Left cardiac atrium (tissue), 4 donors: ENCODE measurements at regions of chr12 and their contacts with region 1.

Region 1: GRCh38 chr12:46675736-46676135 is 150.1 kb downstream of the SLC38A4 start:
- DNase-seq: peak; percentile 34
- ATAC-seq: peak; percentile 34 to 42

Region 2: GRCh38 chr12:46124848-46125619 is 550.7 kb before region 1 on chr12:
- intact Hi-C with region 1: loop called in 1 of 2 experiments (anchors 10 kb)
- DNase-seq: peak; percentile 34
- ATAC-seq: peak; percentile 88 to 96

Region 3: GRCh38 chr12:46153268-46153872 is 522.4 kb before region 1 on chr12:
- intact Hi-C with region 1: loop called in 1 of 2 experiments (anchors 10 kb)
- DNase-seq: no peak
- ATAC-seq: no peak

Region 4: GRCh38 chr12:46507766-46508165 is 168.0 kb before region 1 on chr12:
- intact Hi-C with region 1: no loop called
- DNase-seq: no peak
- ATAC-seq: no peak

Region 5: GRCh38 chr12:47021298-47021697 is 345.6 kb after region 1 on chr12:
- intact Hi-C with region 1: loop called in 1 of 2 experiments (anchors 5 kb)
- DNase-seq: no peak
- ATAC-seq: peak in 1 of 2 donors; percentile 37